ENCODE measurements at regions of chr2 and their contacts with region 1.

Region 1: GRCh38 chr2:170815746-170816503 is 762 bp upstream of the GAD1 start:
- DNase-seq: no peak
- H3K4me3 ChIP-seq: peak overlapping the region; percentile 51
- CTCF ChIP-seq: peak; percentile 68

Region 2: GRCh38 chr2:170235860-170236679 is 579.9 kb before region 1 on chr2:
- CTCF ChIA-PET with region 1: interaction called, 10 read pairs
- POLR2A ChIA-PET with region 1: no interaction called
- DNase-seq: no peak
- H3K4me3 ChIP-seq: no peak overlapping the region
- CTCF ChIP-seq: peak; percentile 21

Region 3: GRCh38 chr2:170324640-170325046 is 491.3 kb before region 1 on chr2:
- CTCF ChIA-PET with region 1: interaction called, 12 read pairs
- POLR2A ChIA-PET with region 1: no interaction called
- DNase-seq: no peak
- H3K4me3 ChIP-seq: no peak overlapping the region
- CTCF ChIP-seq: peak; percentile 58

Region 4: GRCh38 chr2:170361090-170361936 is 454.6 kb before region 1 on chr2:
- CTCF ChIA-PET with region 1: interaction called, 25 read pairs
- POLR2A ChIA-PET with region 1: no interaction called
- DNase-seq: no peak
- H3K4me3 ChIP-seq: no peak overlapping the region
- CTCF ChIP-seq: peak; percentile 72

Region 5: GRCh38 chr2:170369894-170370293 is 446.0 kb before region 1 on chr2:
- CTCF ChIA-PET with region 1: interaction called, 49 read pairs
- POLR2A ChIA-PET with region 1: no interaction called
- DNase-seq: no peak
- H3K4me3 ChIP-seq: no peak overlapping the region
- CTCF ChIP-seq: no peak

Region 6: GRCh38 chr2:170377500-170378207 is 438.3 kb before region 1 on chr2:
- CTCF ChIA-PET with region 1: interaction called, 61 read pairs
- POLR2A ChIA-PET with region 1: no interaction called
- DNase-seq: no peak
- H3K4me3 ChIP-seq: no peak overlapping the region
- CTCF ChIP-seq: no peak

Region 7: DNA sequence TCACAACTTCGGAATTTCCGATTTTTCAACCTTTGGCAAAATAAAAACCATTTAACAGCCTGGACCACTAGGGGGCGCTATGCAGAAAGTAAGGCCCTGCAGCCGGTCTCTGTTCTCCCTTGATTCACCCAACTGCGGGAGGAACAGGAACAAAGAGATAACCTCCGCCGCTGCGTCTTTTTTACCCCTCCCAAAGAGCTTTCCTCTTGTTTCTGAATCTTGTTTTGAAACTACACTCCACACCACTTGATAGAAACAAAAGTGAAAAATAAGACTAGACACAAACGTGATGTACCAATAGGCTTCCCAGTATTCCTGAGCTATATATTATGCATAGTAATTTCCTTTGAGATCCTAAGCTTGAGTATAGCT is 406.8 kb before region 1 on chr2:
- CTCF ChIA-PET with region 1: interaction called, 89 read pairs
- POLR2A ChIA-PET with region 1: no interaction called
- DNase-seq: no peak
- H3K4me3 ChIP-seq: no peak overlapping the region
- CTCF ChIP-seq: peak; percentile 65

Measured in AG04449 (cell line).